Sciatic nerve (tissue), 2 donors: ENCODE measurements at regions of chr2 and their contacts with region 1.

Region 1: DNA sequence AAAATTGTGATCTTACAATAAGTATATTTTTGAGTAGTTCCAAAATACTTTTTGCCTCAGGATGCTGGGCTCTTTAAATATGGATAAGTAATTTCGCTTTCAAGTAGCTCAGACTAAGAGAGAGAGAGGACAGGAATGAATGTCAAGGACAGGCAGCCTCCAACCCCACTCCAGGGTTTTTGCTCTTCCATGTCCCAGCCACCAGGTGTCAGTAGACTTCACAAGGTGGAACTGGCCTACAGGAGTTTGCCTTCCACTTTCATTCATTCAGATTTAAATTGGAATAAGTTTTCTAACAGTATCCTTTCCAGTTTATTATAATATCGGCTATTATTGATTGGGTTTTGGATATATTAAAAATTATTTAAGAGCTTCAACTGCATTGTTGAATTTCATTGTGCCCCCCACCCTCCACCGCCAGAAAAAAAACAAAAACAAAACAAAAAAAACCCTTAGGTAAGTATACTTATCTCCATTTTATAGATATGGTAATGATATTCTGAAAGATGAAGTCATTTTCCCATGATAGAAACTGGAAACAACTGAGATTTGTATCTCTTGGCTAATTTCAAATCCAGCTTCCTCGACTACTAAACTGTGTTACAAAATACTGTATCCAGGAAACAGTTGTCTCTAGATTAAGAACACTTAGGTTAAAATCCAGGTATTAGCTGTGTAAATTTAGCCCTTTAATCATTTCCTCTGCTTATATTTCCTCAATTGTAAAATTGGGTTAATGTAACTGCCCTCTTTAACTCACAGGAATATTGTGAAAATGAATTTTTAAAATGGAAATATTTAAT is 793.1 kb downstream of the ERBB4 start:
- DNase-seq: no peak
- ATAC-seq: no peak

Region 2: DNA sequence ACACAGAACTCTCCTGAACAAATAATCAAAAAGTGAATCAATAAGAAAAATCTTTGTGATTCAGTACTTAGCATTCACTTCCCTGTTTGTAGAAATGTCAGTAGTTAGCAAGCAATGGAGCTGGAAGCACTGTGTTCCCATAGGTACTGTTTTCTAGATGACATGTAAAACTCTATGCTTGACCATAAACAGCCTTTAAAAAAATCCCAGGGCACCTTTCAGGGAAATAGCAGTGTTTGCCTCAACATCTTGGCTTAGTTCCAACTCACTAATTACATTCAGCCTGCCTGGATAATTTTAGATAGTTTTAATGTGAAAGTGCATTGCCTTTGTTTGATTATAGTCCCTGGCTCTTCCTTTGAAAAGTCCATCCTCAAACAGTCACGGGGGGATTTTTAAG is 71.3 kb after region 1 on chr2:
- intact Hi-C with region 1: no loop called
- DNase-seq: no peak
- ATAC-seq: no peak

Region 3: DNA sequence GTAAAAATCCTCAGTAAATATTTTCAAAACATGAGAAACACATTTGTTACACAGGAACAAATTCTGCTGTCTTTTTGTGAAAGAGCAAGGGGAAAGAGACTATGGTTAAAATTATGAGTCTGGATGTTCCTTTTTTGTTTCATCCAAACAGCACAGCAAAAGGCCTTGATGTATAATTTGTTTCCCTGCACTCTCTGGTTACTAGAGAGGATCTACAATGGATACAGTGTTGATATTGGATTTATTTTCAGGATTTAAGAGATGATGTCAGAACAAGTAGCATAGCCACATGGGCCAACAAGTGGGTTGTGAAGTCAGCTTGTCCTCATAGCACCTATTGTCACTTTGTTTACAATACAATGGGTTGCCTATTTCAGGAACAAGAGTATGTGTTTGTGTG is 804.4 kb after region 1 on chr2:
- intact Hi-C with region 1: loop called (anchors 10 kb)
- DNase-seq: no peak
- ATAC-seq: no peak